MCF 10A (cell line): ENCODE measurements at regions of chr9 and their contacts with region 1.

Region 1: GRCh38 chr9:121213136-121213806 is 11.6 kb upstream of the RAB14 start:
- DNase-seq: peak; percentile 90
- H3K4me3 Mint-ChIP-seq: no peak overlapping the region
- H3K27ac Mint-ChIP-seq: peak overlapping the region; percentile 54
- H3K4me1 Mint-ChIP-seq: peaks cover 8% of the 10 kb centered on the region
- H3K27me3 Mint-ChIP-seq: no peaks in the 10 kb centered on the region
- CTCF ChIP-seq: peak; percentile 97

Region 2: GRCh38 chr9:121201738-121202533 is 11.3 kb before region 1 on chr9 and contains the start of gene RAB14:
- CTCF ChIA-PET with region 1: interaction called, 15 read pairs
- POLR2A ChIA-PET with region 1: interaction called, 21 read pairs
- intact Hi-C with region 1: no loop called
- DNase-seq: peak; percentile 98
- H3K4me3 Mint-ChIP-seq: peak within 1 kb of the TSS; percentile 83
- H3K27ac Mint-ChIP-seq: peak within 1 kb of the TSS; percentile 81
- H3K4me1 Mint-ChIP-seq: peaks cover 26% of the 10 kb centered on the region
- H3K27me3 Mint-ChIP-seq: no peaks in the 10 kb centered on the region
- CTCF ChIP-seq: peak; percentile 47
- total RNA-seq, gene RAB14: 65.8 and 77.0 TPM in 2 replicates

Region 3: GRCh38 chr9:121246821-121247561 is 33.7 kb after region 1 on chr9:
- CTCF ChIA-PET with region 1: interaction called, 12 read pairs
- POLR2A ChIA-PET with region 1: interaction called, 3 read pairs
- intact Hi-C with region 1: no loop called
- DNase-seq: peak; percentile 55
- H3K4me3 Mint-ChIP-seq: no peak overlapping the region
- H3K27ac Mint-ChIP-seq: no peak overlapping the region
- H3K4me1 Mint-ChIP-seq: peaks cover 6% of the 10 kb centered on the region
- H3K27me3 Mint-ChIP-seq: no peaks in the 10 kb centered on the region
- CTCF ChIP-seq: no peak

Region 4: GRCh38 chr9:121278535-121279261 is 65.4 kb after region 1 on chr9:
- CTCF ChIA-PET with region 1: interaction called, 52 read pairs
- POLR2A ChIA-PET with region 1: interaction called, 10 read pairs
- intact Hi-C with region 1: no loop called
- DNase-seq: peak; percentile 94
- H3K4me3 Mint-ChIP-seq: peak overlapping the region; percentile 65
- H3K27ac Mint-ChIP-seq: peak overlapping the region; percentile 96
- H3K4me1 Mint-ChIP-seq: peaks cover 62% of the 10 kb centered on the region
- H3K27me3 Mint-ChIP-seq: no peaks in the 10 kb centered on the region
- CTCF ChIP-seq: peak; percentile 83

Region 5: GRCh38 chr9:121308765-121309164 is 95.5 kb after region 1 on chr9:
- CTCF ChIA-PET with region 1: interaction called, 33 read pairs
- POLR2A ChIA-PET with region 1: no interaction called
- intact Hi-C with region 1: no loop called
- DNase-seq: no peak
- H3K4me3 Mint-ChIP-seq: no peak overlapping the region
- H3K27ac Mint-ChIP-seq: no peak overlapping the region
- H3K4me1 Mint-ChIP-seq: peaks cover 7% of the 10 kb centered on the region
- H3K27me3 Mint-ChIP-seq: no peaks in the 10 kb centered on the region
- CTCF ChIP-seq: no peak

Region 6: DNA sequence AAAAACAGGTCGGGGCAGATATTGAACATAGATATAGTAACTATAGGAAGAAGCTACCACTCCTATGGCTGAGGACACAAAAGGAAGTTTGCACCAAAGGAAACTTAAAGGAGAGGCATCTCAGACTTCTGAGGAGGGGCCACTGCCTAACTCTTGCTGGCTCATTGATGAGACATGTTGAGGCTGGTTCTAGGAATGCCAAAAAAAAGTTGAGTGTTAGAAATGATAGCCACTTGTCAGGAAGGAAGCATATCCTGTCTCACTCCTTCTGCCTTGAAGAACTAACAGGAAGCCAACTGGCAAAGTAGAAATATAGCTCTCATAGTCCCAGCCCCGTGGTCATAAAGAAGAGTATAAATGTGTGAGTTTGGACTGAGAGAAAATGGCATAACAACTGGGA is 180.0 kb after region 1 on chr9:
- CTCF ChIA-PET with region 1: interaction called, 125 read pairs
- POLR2A ChIA-PET with region 1: interaction called, 17 read pairs
- intact Hi-C with region 1: no loop called
- DNase-seq: peak; percentile 43
- H3K4me3 Mint-ChIP-seq: no peak overlapping the region
- H3K27ac Mint-ChIP-seq: peak overlapping the region; percentile 83
- H3K4me1 Mint-ChIP-seq: peaks cover 18% of the 10 kb centered on the region
- H3K27me3 Mint-ChIP-seq: no peaks in the 10 kb centered on the region
- CTCF ChIP-seq: no peak

Region 7: DNA sequence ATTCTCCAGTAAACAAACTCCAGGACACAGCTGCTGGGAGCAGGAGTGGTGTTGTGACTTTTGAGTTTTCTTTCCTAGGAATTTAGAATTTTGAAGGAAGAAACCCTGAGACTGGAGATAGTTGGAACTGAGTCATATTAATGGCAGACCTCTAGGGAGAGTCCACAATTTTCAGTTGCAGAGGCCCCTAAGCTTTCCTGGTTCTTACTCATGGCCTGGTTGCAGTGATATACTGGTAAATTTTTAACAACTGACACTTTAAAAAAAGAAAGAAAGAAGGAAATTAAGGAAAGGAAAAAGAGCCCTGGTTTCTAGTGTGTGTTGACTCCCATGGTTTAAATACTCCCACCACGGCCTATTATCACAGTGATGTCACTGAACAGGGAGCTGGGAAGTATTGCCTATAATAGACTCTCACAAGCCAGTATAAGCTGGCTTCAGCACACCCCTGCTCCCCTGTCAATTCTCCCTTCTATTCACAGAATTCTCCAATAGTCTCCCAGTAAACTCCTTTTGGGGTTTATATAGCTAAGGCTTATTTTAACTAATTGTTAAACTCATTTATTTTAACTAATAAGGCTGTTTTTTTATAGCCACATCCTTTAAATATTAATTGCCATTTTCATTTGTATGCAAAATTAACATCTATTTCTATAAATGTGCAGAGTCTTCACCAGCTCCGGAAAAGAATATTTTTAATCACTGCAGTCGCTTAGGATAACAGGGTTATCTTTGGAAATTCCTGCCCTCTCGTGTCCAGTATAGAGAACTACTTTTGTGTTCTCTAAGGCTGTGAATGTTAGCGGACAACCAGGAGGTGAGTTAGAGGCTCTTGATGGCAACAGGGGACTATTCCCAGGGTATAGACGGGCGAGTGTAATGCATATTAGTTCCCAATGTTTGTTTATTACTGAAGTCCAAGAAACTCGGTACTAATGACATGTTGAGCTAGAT is 226.7 kb after region 1 on chr9:
- CTCF ChIA-PET with region 1: interaction called, 37 read pairs
- POLR2A ChIA-PET with region 1: no interaction called
- intact Hi-C with region 1: no loop called
- DNase-seq: peak; percentile 17
- H3K4me3 Mint-ChIP-seq: no peak overlapping the region
- H3K27ac Mint-ChIP-seq: no peak overlapping the region
- H3K4me1 Mint-ChIP-seq: no peaks in the 10 kb centered on the region
- H3K27me3 Mint-ChIP-seq: peaks cover 26% of the 10 kb centered on the region
- CTCF ChIP-seq: peak; percentile 15